ENCODE measurements at regions of chr4 and their contacts with region 1.

Region 1: DNA sequence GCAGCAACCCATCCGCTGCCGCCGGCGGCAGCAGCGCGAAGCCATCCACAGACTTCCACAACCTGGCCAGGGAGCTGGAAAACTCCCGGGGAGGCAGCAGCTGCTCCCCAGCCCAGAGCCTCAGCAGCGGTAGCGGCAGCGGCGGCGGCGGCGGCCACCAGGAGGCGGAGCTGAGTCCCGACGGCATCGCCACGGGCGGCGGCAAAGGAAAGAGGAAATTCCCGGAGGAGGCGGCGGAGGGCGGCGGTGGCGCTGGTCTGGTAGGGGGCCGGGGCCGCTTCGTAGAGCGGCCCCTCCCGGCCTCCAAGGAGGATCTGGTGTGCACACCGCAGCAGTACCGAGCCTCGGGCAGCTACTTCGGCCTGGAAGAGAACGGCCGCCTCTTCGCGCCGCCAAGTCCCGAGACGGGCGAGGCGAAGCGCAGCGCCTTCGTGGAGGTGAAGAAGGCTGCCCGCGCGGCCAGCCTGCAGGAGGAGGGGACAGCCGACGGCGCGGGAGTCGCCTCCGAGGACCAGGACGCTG is 4.9 kb downstream of the PRDM8 start:
- DNase-seq: peak; percentile 95
- H3K4me3 ChIP-seq: peak overlapping the region; percentile 51 to 78 (median 72)
- H3K27ac ChIP-seq: peak overlapping the region; percentile 94 to 97 (median 94)
- H3K4me1 ChIP-seq: peaks cover 0 to 22% (median 13%) of the 10 kb centered on the region in 4 donors
- H3K27me3 ChIP-seq: no peaks in the 10 kb centered on the region
- CTCF ChIP-seq: peak; percentile 69 to 92 (median 87)
- EP300 ChIP-seq: no peak
- POLR2A ChIP-seq: peak in 1 of 2 donors; percentile 15

Region 2: DNA sequence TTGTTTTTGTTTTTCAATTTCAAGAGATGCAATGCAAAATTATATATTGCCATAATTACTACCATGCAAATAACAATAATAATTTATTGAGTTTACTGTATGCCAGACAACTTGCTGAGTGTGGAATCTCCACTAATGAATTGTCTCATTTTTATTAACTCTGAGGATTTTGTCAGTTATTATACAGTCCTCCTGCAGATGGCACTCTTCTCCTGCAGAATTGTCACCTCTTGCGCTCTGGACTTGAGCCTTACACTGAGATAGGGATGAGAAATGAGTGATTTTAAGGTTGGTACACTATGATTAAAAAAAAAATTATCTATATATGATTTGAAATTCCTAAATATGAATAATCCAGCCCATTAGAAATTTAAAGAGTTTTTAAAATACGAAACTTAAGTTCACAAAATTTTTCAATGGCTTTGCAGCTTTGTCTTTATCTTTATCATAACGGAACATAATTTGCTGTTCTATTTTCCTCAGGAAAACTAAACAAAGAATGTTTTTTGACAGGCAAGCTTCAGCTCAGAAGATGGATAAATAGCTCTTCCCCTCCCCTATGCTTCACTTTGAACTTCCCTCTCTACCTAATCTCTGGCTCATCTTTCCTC is 1250.3 kb before region 1 on chr4:
- intact Hi-C with region 1: loop called (anchors 5 kb)
- DNase-seq: no peak
- H3K4me3 ChIP-seq: no peak overlapping the region
- H3K27ac ChIP-seq: no peak overlapping the region
- H3K4me1 ChIP-seq: no peaks in the 10 kb centered on the region
- H3K27me3 ChIP-seq: no peaks in the 10 kb centered on the region
- CTCF ChIP-seq: peak; percentile 53 to 69 (median 64)
- EP300 ChIP-seq: no peak
- POLR2A ChIP-seq: no peak

Region 3: DNA sequence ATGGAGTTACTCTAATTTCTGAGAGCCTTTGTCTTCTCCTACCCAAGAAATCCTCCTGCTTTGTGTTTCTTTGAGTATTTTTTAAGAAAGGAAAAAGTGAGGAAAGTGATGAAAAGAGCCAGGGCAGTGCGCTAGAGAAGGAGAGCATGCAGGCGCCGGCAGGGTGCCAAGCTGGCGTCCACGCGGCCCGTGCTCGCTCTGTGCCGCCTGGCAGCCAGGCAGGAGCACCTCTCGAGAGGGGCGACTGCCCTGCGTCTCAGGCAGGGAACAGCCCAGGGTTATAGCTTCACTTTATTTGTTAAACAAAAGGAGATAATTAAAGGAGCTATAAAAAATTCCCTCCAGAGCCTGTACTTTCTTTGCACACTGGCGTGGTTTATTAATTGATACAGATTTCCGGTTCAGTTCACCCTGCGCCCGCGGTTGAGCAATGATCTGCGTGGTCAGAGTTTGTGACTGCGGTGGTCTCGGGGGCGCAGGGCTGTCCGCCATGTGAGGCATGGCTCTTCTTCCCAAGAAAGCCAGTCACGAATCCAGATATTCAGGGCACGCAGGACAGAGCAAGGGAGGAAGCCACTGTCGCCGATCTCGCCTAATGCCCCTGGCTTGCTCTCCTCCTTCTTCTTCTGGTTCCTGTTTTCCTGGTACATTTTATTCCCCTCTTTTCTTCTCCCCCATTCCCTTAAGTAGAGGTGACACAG is 1152.3 kb before region 1 on chr4:
- intact Hi-C with region 1: loop called (anchors 5 kb)
- DNase-seq: peak; percentile 81
- H3K4me3 ChIP-seq: peak overlapping the region in 3 of 4 donors; percentile 23 to 37 (median 28)
- H3K27ac ChIP-seq: peak overlapping the region in 3 of 4 donors; percentile 73 to 80 (median 76)
- H3K4me1 ChIP-seq: peaks cover 0 to 74% (median 55%) of the 10 kb centered on the region in 4 donors
- H3K27me3 ChIP-seq: no peaks in the 10 kb centered on the region
- CTCF ChIP-seq: no peak
- EP300 ChIP-seq: no peak
- POLR2A ChIP-seq: no peak

Region 4: GRCh38 chr4:79831701-79832514 is 370.3 kb before region 1 on chr4:
- intact Hi-C with region 1: loop called (anchors 5 kb)
- DNase-seq: no peak
- H3K4me3 ChIP-seq: no peak overlapping the region
- H3K27ac ChIP-seq: peak overlapping the region in 2 of 4 donors; percentile 57 to 70
- H3K4me1 ChIP-seq: peaks cover 0 to 22% (median 18%) of the 10 kb centered on the region in 4 donors
- H3K27me3 ChIP-seq: no peaks in the 10 kb centered on the region
- CTCF ChIP-seq: no peak
- EP300 ChIP-seq: no peak
- POLR2A ChIP-seq: no peak

Region 5: GRCh38 chr4:79996851-79997250 is 205.4 kb before region 1 on chr4:
- intact Hi-C with region 1: no loop called
- DNase-seq: no peak
- H3K4me3 ChIP-seq: no peak overlapping the region
- H3K27ac ChIP-seq: peak overlapping the region in 2 of 4 donors; percentile 20 to 24
- H3K4me1 ChIP-seq: peaks cover 0 to 37% (median 32%) of the 10 kb centered on the region in 4 donors
- H3K27me3 ChIP-seq: no peaks in the 10 kb centered on the region
- CTCF ChIP-seq: no peak
- EP300 ChIP-seq: no peak
- POLR2A ChIP-seq: no peak

Region 6: GRCh38 chr4:80184053-80184790 is 18.0 kb before region 1 on chr4:
- intact Hi-C with region 1: loop called (anchors 1 kb)
- DNase-seq: peak; percentile 95
- H3K4me3 ChIP-seq: peak overlapping the region; percentile 55 to 80 (median 71)
- H3K27ac ChIP-seq: peak overlapping the region; percentile 76 to 86 (median 85)
- H3K4me1 ChIP-seq: peaks cover 0 to 29% (median 19%) of the 10 kb centered on the region in 4 donors
- H3K27me3 ChIP-seq: no peaks in the 10 kb centered on the region
- CTCF ChIP-seq: peak; percentile 89 to 95 (median 92)
- EP300 ChIP-seq: no peak
- POLR2A ChIP-seq: no peak

Region 7: GRCh38 chr4:80335554-80336358 is 133.5 kb after region 1 on chr4 and contains the start of gene CFAP299:
- intact Hi-C with region 1: loop called (anchors 10 kb)
- DNase-seq: peak; percentile 82
- H3K4me3 ChIP-seq: peak within 1 kb of the TSS; percentile 34 to 65 (median 58)
- H3K27ac ChIP-seq: peak within 1 kb of the TSS in 3 of 4 donors; percentile 13 to 58 (median 39)
- H3K4me1 ChIP-seq: peaks cover 0 to 17% (median 9%) of the 10 kb centered on the region in 4 donors
- H3K27me3 ChIP-seq: no peaks in the 10 kb centered on the region
- CTCF ChIP-seq: peak in 3 of 4 experiments; percentile 11 to 54 (median 42)
- EP300 ChIP-seq: no peak
- POLR2A ChIP-seq: no peak
- total RNA-seq, gene CFAP299: 1.4 TPM in 1 of 4 donors, not detected in the others

Region 8: DNA sequence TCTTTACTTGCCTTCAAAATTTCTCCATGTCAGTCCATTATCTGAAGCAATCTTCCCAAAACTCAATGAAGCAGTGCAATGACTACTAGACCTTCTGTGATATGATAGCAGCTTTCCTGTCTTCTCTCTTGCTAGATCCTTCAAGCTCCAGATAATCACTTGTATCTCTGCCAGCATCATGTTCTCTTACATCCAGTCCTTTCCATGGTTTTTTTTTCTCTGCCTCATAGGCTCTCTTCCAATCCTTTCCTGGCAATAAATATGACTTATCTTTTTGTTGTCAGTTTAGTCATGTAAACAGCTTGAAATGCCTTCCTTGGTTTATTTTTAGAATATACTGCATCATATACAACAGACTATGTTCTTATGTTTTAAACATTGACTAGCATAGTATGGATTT is 326.8 kb after region 1 on chr4:
- intact Hi-C with region 1: no loop called
- DNase-seq: no peak
- H3K4me3 ChIP-seq: no peak overlapping the region
- H3K27ac ChIP-seq: no peak overlapping the region
- H3K4me1 ChIP-seq: peaks cover 0 to 4% (median 0%) of the 10 kb centered on the region in 4 donors
- H3K27me3 ChIP-seq: no peaks in the 10 kb centered on the region
- CTCF ChIP-seq: no peak
- EP300 ChIP-seq: no peak
- POLR2A ChIP-seq: no peak

Measured in sigmoid colon (tissue), 7 donors.